HCT116 (cell line): ENCODE measurements at regions of chr10 and their contacts with region 1.

Region 1: GRCh38 chr10:102641880-102642735 is 2.2 kb upstream of the TRIM8 start:
- DNase-seq: peak; percentile 96
- ATAC-seq: peak; percentile 71
- H3K4me3 ChIP-seq: peak overlapping the region; percentile 79 to 97
- H3K27ac ChIP-seq: peak overlapping the region; percentile 86
- H3K4me1 ChIP-seq: peaks cover 14 to 35% of the 10 kb centered on the region in 2 experiments
- H3K27me3 ChIP-seq: no peaks in the 10 kb centered on the region
- CTCF ChIP-seq: 0 out of 6 replicates have a peak, but pooled peaks of 1 of the 3 experiments have one; percentile 6
- POLR2A ChIP-seq: peak; percentile 42
- RAD21 ChIP-seq: no peak

Region 2: DNA sequence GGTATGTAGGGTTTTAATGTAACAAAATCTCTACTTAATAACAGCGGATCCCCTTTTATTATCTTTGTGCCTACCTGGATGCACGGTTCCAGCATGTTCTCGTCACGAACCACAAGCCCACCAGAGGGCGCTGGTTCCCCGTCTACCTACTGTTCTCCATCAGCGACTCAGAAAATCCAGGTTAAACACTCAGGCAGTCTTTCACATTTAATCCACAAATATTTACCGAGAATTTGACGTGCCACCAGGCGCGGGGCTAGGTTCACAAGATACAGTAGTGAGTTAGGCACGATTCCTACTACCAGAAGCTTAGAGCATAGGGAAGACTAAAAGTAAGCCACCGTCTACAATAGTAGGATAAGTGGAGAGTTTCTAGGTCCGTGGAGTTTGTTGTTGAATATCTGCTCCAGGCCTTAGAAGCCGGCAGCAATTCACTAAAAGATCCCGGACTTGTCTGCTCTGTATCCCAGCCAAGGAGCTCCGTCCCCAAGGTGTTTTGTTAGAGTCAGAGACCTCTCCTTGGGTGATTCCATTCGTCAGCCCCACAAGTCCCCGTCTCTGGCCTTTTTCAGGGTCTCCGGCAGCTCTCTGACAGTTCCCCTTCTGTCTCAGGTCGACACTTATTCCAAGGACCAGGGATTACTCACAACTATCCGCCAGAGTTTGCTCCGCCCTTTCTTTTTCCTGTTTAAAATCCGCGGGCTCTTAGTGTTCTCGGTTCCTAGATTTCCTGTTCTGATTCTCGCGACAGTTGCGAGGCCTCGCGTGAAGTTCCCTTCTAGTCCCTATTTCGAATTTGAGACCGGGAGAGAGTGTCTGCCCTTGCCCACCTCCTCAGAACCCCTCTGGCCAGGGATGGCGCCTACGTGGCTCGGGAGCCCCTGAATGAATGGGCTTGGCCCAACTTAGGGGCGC is 1581.8 kb before region 1 on chr10:
- CTCF ChIA-PET with region 1: no interaction called
- POLR2A ChIA-PET with region 1: no interaction called
- RAD21 ChIA-PET with region 1: no interaction called
- intact Hi-C with region 1: loop called (anchors 5 kb)
- DNase-seq: peak; percentile 98
- ATAC-seq: peak; percentile 67
- H3K4me3 ChIP-seq: peak overlapping the region; percentile 80 to 84
- H3K27ac ChIP-seq: peak overlapping the region; percentile 99
- H3K4me1 ChIP-seq: peaks cover 42 to 51% of the 10 kb centered on the region in 2 experiments
- H3K27me3 ChIP-seq: no peaks in the 10 kb centered on the region
- CTCF ChIP-seq: peak in 2 of 3 experiments; percentile 98 to 99; a peak in 4 of 6 replicates
- POLR2A ChIP-seq: peak; percentile 37
- RAD21 ChIP-seq: no peak

Region 3: GRCh38 chr10:102291221-102291905 is 350.7 kb before region 1 on chr10:
- CTCF ChIA-PET with region 1: no interaction called
- POLR2A ChIA-PET with region 1: no interaction called
- RAD21 ChIA-PET with region 1: no interaction called
- intact Hi-C with region 1: no loop called
- DNase-seq: no peak
- ATAC-seq: no peak
- H3K4me3 ChIP-seq: no peak overlapping the region
- H3K27ac ChIP-seq: no peak overlapping the region
- H3K4me1 ChIP-seq: no peaks in the 10 kb centered on the region
- H3K27me3 ChIP-seq: no peaks in the 10 kb centered on the region
- CTCF ChIP-seq: no peak
- POLR2A ChIP-seq: no peak
- RAD21 ChIP-seq: no peak

Region 4: DNA sequence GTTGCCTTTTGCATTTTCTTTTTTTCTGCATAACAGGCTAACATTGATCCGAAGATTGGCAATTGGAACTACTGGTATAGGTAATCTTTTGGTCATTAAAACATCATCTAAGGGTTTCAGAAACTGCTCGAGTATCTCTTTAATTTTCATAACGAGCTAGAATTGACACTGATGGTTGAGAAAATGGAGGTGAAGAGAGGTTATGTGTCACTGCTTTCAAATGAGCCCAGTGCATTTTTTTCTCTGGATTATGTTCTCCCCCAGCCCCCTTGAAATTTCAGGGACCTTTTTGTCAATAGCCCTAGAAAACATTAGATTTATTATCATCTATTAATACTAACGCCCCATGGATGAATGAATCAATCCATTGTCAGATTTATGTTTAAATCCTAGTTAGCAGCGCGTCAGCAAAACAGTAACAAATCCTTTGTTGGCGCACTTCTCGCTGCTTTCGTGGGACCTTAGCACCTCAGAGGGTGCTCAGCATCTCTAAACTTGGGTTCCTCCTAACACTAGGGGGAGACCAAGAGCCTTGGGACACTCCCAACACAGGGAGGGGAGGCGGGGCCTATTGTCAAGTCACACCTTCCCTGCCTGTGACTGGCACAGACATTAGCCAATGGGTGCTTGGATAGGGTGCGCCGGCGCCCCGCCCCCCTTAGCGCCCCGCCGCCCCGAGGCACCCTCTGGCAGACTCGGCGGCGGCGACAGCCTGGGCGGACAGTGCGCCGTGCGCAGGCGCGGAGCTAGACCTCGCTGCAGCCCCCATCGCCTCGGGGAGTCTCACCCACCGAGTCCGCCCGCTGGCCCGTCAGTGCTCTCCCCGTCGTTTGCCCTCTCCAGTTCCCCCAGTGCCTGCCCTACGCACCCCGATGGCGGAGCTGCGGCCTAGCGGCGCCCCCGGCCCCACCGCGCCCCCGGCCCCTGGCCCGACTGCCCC is 138.6 kb before region 1 on chr10 and contains the start of gene SUFU:
- CTCF ChIA-PET with region 1: interaction called, 6 read pairs
- POLR2A ChIA-PET with region 1: interaction called, 3 read pairs
- RAD21 ChIA-PET with region 1: no interaction called
- intact Hi-C with region 1: loop called (anchors 1 kb)
- DNase-seq: peak; percentile 100
- ATAC-seq: peak; percentile 72
- H3K4me3 ChIP-seq: peak within 1 kb of the TSS; percentile 83 to 89
- H3K27ac ChIP-seq: peak within 1 kb of the TSS; percentile 59
- H3K4me1 ChIP-seq: peaks cover 13 to 27% of the 10 kb centered on the region in 2 experiments
- H3K27me3 ChIP-seq: no peaks in the 10 kb centered on the region
- CTCF ChIP-seq: peak in 2 of 3 experiments; percentile 94 to 99; a peak in 4 of 6 replicates
- POLR2A ChIP-seq: peak; percentile 53
- RAD21 ChIP-seq: no peak
- total RNA-seq, gene SUFU: 18.8 TPM

Region 5: DNA sequence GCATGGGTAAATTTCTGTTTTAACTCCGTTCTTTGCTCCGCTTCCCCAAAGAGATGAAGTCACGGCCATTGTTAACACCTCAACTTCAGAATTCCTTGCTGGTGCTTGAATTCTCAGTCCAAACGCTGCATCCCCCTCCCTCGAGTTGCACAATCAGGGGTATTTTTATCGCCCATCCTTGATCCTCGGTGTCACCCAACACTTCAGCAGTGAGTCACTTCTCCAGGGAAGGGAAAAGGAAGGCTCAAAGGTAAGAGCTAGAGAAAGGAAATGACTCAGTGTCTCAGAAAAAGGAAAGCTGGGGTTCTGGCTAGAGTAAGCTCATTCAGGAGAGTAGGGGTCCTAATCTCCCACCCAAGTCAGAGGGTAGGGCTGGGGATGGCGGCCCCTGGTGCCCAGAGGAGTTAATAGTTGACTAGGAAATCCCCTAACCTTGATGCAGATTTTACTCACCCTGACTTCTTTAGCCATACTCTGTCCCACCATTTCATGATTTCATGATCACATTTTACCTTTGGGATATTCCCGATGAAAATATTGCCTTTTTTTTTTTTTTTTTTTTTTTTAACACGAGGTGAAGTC is 37.6 kb before region 1 on chr10:
- CTCF ChIA-PET with region 1: interaction called, 6 read pairs
- POLR2A ChIA-PET with region 1: interaction called, 5 read pairs
- RAD21 ChIA-PET with region 1: interaction called in 1 of 2 experiments, 4 read pairs
- intact Hi-C with region 1: loop called (anchors 1 kb)
- DNase-seq: peak; percentile 86
- ATAC-seq: peak; percentile 79
- H3K4me3 ChIP-seq: peak overlapping the region; percentile 15 to 43
- H3K27ac ChIP-seq: peak overlapping the region; percentile 92
- H3K4me1 ChIP-seq: peaks cover 58 to 76% of the 10 kb centered on the region in 2 experiments
- H3K27me3 ChIP-seq: no peaks in the 10 kb centered on the region
- CTCF ChIP-seq: no peak
- POLR2A ChIP-seq: no peak
- RAD21 ChIP-seq: no peak

Region 6: GRCh38 chr10:102629661-102630614 is 12.2 kb before region 1 on chr10:
- CTCF ChIA-PET with region 1: interaction called, 3 read pairs
- POLR2A ChIA-PET with region 1: interaction called, 10 read pairs
- RAD21 ChIA-PET with region 1: interaction called in 1 of 2 experiments, 3 read pairs
- intact Hi-C with region 1: no loop called
- DNase-seq: no peak
- ATAC-seq: peak; percentile 71
- H3K4me3 ChIP-seq: peak overlapping the region in 1 of 2 experiments; percentile 21; a peak in 2 of 4 replicates
- H3K27ac ChIP-seq: peak overlapping the region; percentile 61
- H3K4me1 ChIP-seq: peaks cover 61 to 89% of the 10 kb centered on the region in 2 experiments
- H3K27me3 ChIP-seq: no peaks in the 10 kb centered on the region
- CTCF ChIP-seq: no peak
- POLR2A ChIP-seq: no peak
- RAD21 ChIP-seq: no peak

Region 7: GRCh38 chr10:102669206-102670064 is 27.3 kb after region 1 on chr10:
- CTCF ChIA-PET with region 1: interaction called, 13 read pairs
- POLR2A ChIA-PET with region 1: interaction called, 3 read pairs
- RAD21 ChIA-PET with region 1: interaction called in 1 of 2 experiments, 9 read pairs
- intact Hi-C with region 1: loop called (anchors 1 kb)
- DNase-seq: peak; percentile 35
- ATAC-seq: peak; percentile 85
- H3K4me3 ChIP-seq: no peak overlapping the region
- H3K27ac ChIP-seq: peak overlapping the region; percentile 1; the same call in 1 of the 2 replicates
- H3K4me1 ChIP-seq: peaks cover 13 to 23% of the 10 kb centered on the region in 2 experiments
- H3K27me3 ChIP-seq: no peaks in the 10 kb centered on the region
- CTCF ChIP-seq: peak; percentile 77 to 87 (median 83); a peak in 5 of 6 replicates
- POLR2A ChIP-seq: no peak
- RAD21 ChIP-seq: peak; percentile 38; the same call in 1 of the 2 replicates

Region 8: DNA sequence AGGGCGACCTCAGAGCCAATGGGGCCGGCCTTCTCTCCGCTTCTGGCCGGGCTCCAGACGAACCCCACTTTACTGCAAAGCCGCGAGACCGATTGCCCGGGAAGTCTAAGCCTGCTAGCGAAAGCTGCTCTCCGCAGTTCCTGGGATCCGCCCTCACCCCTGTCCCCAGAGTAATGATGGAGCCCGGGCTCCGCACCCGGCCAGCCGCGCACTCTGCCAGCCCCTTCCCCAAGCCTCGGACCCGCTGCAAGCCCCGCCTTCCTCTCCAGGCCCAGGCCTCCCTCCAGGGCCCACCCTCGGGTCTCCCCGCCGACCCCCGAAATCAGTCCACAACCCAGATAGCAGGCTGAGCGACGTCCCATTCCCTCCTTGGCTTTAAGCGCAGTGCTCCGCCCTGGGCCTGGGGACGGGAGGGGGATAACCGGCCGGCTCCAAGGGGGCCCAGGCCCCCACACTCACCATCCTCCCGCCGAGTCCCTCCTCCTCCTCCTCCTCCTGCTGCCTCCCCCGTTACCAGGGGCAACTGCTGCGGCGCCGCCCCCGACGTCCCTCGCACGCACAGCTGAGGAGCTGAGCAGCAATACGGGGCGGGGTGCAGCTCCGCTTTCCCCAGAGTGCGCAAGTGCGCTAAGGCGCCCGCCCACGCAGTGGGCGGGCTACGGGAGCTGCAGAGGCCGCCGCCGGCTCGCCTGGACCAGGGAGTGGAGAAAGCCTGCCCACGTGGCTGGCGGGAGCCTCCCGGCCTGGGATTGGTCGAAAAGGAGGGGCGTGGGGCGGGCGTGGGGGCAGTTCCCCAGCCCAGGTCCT is 71.9 kb after region 1 on chr10 and contains the start of gene ARL3:
- CTCF ChIA-PET with region 1: no interaction called
- POLR2A ChIA-PET with region 1: interaction called, 8 read pairs
- RAD21 ChIA-PET with region 1: no interaction called
- intact Hi-C with region 1: loop called (anchors 2 kb)
- DNase-seq: peak; percentile 98
- ATAC-seq: peak; percentile 89
- H3K4me3 ChIP-seq: peak within 1 kb of the TSS; percentile 88 to 95
- H3K27ac ChIP-seq: peak within 1 kb of the TSS; percentile 77
- H3K4me1 ChIP-seq: peaks cover 18 to 29% of the 10 kb centered on the region in 2 experiments
- H3K27me3 ChIP-seq: no peaks in the 10 kb centered on the region
- CTCF ChIP-seq: peak in 2 of 3 experiments; percentile 54 to 60; a peak in 4 of 6 replicates
- POLR2A ChIP-seq: no peak
- RAD21 ChIP-seq: no peak
- total RNA-seq, gene ARL3: 13.3 TPM